Dorsolateral prefrontal cortex (tissue), 120 donors: ENCODE measurements at regions of chr16 and their contacts with region 1.

Region 1: GRCh38 chr16:66516808-66517585 is 32.9 kb downstream of the TK2 start:
- DNase-seq: peak; percentile 43 to 95 (median 92)
- H3K4me3 ChIP-seq: peak overlapping the region in 46 of 59 donors; percentile 1 to 58 (median 34)
- H3K27ac ChIP-seq: peak overlapping the region; percentile 83 to 100 (median 98)
- H3K27me3 ChIP-seq: no peaks in the 10 kb centered on the region
- CTCF ChIP-seq: peak in 15 of 56 donors; percentile 4 to 37 (median 18)

Region 2: DNA sequence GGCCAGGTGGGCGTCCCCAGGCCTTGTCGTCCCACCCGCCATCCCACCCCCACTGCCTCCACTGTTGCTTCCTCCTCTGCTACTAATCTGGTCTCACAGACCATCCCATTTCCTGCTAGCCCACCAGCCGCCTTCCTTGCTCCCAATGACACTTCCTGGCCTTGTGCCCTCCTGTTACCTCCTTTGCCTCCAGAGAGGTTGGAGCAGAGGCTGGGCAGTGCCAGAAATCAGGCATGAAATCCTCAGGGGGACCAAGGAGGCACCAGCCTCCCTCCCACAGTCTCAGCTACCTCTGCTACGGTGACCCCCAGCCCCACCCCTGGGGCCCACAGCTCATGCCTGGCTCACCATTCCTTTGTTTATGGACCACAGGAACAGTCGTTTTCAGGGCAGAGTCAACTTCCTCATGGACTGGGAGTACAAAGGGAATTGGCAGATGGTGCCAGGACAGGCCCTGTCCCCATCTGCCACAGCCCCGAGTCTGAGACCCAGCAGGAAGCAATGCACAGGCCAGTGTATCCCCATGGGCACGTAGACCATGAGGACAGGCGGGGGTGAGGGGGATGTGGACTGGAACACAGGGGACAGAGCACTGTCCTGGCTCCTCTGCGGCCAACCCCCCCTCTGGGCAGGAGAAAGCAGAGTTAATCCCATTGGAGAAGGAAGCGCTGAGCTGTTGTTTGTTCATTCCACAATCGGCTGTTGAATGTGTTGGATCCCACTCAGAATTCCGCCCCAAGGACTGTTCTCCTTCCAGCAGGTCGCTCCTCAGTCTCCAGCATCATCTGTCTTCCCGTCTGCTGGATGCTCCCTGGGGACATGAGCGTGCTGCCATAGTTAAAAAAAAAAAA is 152.7 kb before region 1 on chr16:
- intact Hi-C with region 1: no loop called
- DNase-seq: peak in 1 of 10 donors; percentile 33
- H3K4me3 ChIP-seq: no peak overlapping the region
- H3K27ac ChIP-seq: peak overlapping the region in 8 of 59 donors; percentile 18 to 81 (median 46)
- H3K27me3 ChIP-seq: peaks cover 0 to 12% (median 0%) of the 10 kb centered on the region in 45 donors
- CTCF ChIP-seq: no peak

Region 3: GRCh38 chr16:66457888-66458287 is 59.1 kb before region 1 on chr16:
- intact Hi-C with region 1: no loop called
- DNase-seq: peak in 3 of 10 donors; percentile 2 to 15 (median 6)
- H3K4me3 ChIP-seq: no peak overlapping the region
- H3K27ac ChIP-seq: no peak overlapping the region
- H3K27me3 ChIP-seq: peaks cover 0 to 29% (median 6%) of the 10 kb centered on the region in 45 donors
- CTCF ChIP-seq: no peak

Region 4: GRCh38 chr16:66552286-66553177 is 35.5 kb after region 1 on chr16 and contains the start of gene CKLF:
- intact Hi-C with region 1: loop called (anchors 2 to 5 kb)
- DNase-seq: peak; percentile 75 to 95 (median 84)
- H3K4me3 ChIP-seq: peak within 1 kb of the TSS; percentile 61 to 98 (median 80)
- H3K27ac ChIP-seq: peak within 1 kb of the TSS; percentile 90 to 100 (median 98)
- H3K27me3 ChIP-seq: no peaks in the 10 kb centered on the region
- CTCF ChIP-seq: peak in 33 of 56 donors; percentile 8 to 58 (median 25)
- total RNA-seq, gene CKLF: 9.9 to 33.4 (median 19.9) TPM